ENCODE measurements at regions of chr3 and their contacts with region 1.

Region 1: GRCh38 chr3:44761424-44762169 is at the starts of genes KIAA1143 and KIF15:
- DNase-seq: peak; percentile 96
- H3K4me3 Mint-ChIP-seq: peak within 1 kb of the TSS; percentile 77
- H3K27ac Mint-ChIP-seq: peak within 1 kb of the TSS; percentile 88
- H3K4me1 Mint-ChIP-seq: peaks cover 11% of the 10 kb centered on the region
- H3K27me3 Mint-ChIP-seq: no peaks in the 10 kb centered on the region
- CTCF ChIP-seq: no peak
- total RNA-seq, gene KIAA1143: 17.7 and 18.2 TPM in 2 replicates
- total RNA-seq, gene KIF15: 5.6 and 10.6 TPM in 2 replicates

Region 2: DNA sequence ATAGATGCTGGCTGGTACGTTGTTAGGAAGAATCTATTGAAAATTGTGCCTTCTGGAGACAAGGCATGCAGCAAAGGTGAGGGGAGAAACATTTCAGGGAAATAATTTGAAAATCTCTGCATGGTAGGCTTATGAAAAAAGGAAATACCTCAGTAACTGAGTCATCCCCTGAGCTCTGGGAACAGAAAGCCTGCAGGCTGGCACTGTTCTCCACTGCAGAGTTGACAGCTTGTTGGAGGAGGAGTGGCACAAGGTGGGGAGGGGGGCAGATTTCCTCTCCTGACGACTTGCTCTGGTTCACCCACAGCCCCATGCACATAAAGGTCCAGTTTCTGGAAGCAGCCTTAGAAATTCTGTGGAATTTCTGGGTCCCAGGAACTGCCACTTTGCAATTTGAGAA is 891.5 kb before region 1 on chr3:
- CTCF ChIA-PET with region 1: no interaction called
- POLR2A ChIA-PET with region 1: no interaction called
- intact Hi-C with region 1: loop called (anchors 5 kb)
- DNase-seq: peak; percentile 81
- H3K4me3 Mint-ChIP-seq: no peak overlapping the region
- H3K27ac Mint-ChIP-seq: peak overlapping the region; percentile 49
- H3K4me1 Mint-ChIP-seq: peaks cover 66% of the 10 kb centered on the region
- H3K27me3 Mint-ChIP-seq: no peaks in the 10 kb centered on the region
- CTCF ChIP-seq: no peak

Region 3: GRCh38 chr3:44624749-44625480 is 136.7 kb before region 1 on chr3 and contains the start of gene ZNF197:
- CTCF ChIA-PET with region 1: no interaction called
- POLR2A ChIA-PET with region 1: interaction called, 13 read pairs
- intact Hi-C with region 1: loop called (anchors 5 kb)
- DNase-seq: peak; percentile 91
- H3K4me3 Mint-ChIP-seq: peak within 1 kb of the TSS; percentile 85
- H3K27ac Mint-ChIP-seq: peak within 1 kb of the TSS; percentile 80
- H3K4me1 Mint-ChIP-seq: peaks cover 16% of the 10 kb centered on the region
- H3K27me3 Mint-ChIP-seq: no peaks in the 10 kb centered on the region
- CTCF ChIP-seq: no peak
- total RNA-seq, gene ZNF197: 15.6 and 15.8 TPM in 2 replicates

Region 4: GRCh38 chr3:44814751-44815150 is 53.2 kb after region 1 on chr3:
- CTCF ChIA-PET with region 1: no interaction called
- POLR2A ChIA-PET with region 1: no interaction called
- intact Hi-C with region 1: no loop called
- DNase-seq: no peak
- H3K4me3 Mint-ChIP-seq: no peak overlapping the region
- H3K27ac Mint-ChIP-seq: no peak overlapping the region
- H3K4me1 Mint-ChIP-seq: no peaks in the 10 kb centered on the region
- H3K27me3 Mint-ChIP-seq: no peaks in the 10 kb centered on the region
- CTCF ChIP-seq: no peak

Region 5: GRCh38 chr3:44883999-44884431 is 122.4 kb after region 1 on chr3:
- CTCF ChIA-PET with region 1: interaction called, 4 read pairs
- POLR2A ChIA-PET with region 1: interaction called, 19 read pairs
- intact Hi-C with region 1: no loop called
- DNase-seq: peak; percentile 96
- H3K4me3 Mint-ChIP-seq: peak overlapping the region; percentile 30
- H3K27ac Mint-ChIP-seq: peak overlapping the region; percentile 98
- H3K4me1 Mint-ChIP-seq: peaks cover 47% of the 10 kb centered on the region
- H3K27me3 Mint-ChIP-seq: no peaks in the 10 kb centered on the region
- CTCF ChIP-seq: no peak

Region 6: GRCh38 chr3:44976002-44976815 is 214.6 kb after region 1 on chr3 and contains the starts of genes EXOSC7 and ZDHHC3:
- CTCF ChIA-PET with region 1: no interaction called
- POLR2A ChIA-PET with region 1: interaction called, 38 read pairs
- intact Hi-C with region 1: no loop called
- DNase-seq: peak; percentile 84
- H3K4me3 Mint-ChIP-seq: peak within 1 kb of the TSS; percentile 99
- H3K27ac Mint-ChIP-seq: peak within 1 kb of the TSS; percentile 97
- H3K4me1 Mint-ChIP-seq: peaks cover 37% of the 10 kb centered on the region
- H3K27me3 Mint-ChIP-seq: no peaks in the 10 kb centered on the region
- CTCF ChIP-seq: no peak
- total RNA-seq, gene EXOSC7: 59.7 and 73.3 TPM in 2 replicates
- total RNA-seq, gene ZDHHC3: 37.7 and 40.1 TPM in 2 replicates

Region 7: DNA sequence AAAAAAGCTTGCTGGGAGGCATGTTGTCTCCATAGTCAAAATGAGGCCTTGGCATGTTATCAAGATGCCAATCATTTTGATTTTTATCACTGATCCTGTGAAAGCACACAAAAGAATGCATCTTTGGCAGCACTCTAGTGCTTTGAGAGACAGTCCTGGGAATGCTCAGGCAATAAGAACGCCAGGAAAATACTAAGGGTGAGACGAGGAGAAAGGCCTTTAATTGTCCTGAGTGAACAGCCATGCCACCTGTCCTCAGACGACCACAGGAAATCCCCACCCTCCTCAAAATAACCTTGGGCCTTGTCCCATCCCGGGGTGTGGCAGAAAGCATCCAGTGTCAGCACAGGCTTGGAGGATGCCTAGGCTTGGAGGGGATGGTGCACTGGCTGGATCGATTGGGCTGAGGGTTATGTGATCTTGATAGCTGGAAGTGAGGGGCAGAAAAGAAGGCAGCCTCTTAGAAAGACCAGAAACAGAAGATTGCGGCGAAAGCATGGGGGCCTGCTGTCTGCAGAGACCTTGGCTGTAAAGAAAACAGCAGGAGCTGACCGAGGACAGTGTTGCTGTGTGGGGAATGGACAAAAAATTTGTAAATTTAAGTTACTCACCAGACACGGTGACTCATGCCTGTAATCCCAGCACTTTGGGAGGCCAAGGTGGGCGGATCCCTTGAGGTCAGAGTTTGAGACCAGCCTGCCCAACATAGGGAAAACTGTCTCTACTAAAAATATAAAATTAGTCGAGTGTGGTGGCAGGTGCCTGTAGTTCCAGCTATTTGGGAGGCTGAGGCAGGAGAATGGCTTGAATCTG is 457.2 kb after region 1 on chr3:
- CTCF ChIA-PET with region 1: no interaction called
- POLR2A ChIA-PET with region 1: no interaction called
- intact Hi-C with region 1: no loop called
- DNase-seq: peak; percentile 80
- H3K4me3 Mint-ChIP-seq: peak overlapping the region; percentile 37
- H3K27ac Mint-ChIP-seq: peak overlapping the region; percentile 25
- H3K4me1 Mint-ChIP-seq: peaks cover 13% of the 10 kb centered on the region
- H3K27me3 Mint-ChIP-seq: no peaks in the 10 kb centered on the region
- CTCF ChIP-seq: no peak